ENCODE measurements at regions of chr16 and their contacts with region 1.

Region 1: DNA sequence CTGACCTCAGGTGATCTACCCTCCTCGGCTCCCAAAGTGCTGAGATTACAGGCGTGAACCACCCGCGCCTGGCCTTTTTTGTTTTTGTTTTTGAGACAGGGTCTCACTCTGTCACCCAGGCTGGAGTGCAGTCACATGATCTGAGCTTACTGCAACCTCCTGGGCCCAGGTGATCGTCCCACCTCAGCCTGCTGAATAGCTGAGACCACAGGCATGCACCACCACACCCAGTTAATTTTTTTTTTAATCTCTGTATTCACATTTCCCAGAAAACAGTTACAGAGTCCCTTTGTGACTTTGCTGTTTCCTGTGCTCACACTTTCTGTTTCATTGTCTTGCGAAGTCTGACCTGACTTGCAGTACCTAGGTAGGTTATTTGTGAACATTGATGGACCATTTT is 2.7 kb downstream of the CLUAP1 start:
- DNase-seq: peak; percentile 77
- ATAC-seq: peak; percentile 60
- H3K4me3 Mint-ChIP-seq: peak overlapping the region; percentile 65
- H3K27ac Mint-ChIP-seq: peak overlapping the region; percentile 91
- H3K4me1 Mint-ChIP-seq: peaks cover 62% of the 10 kb centered on the region
- H3K27me3 Mint-ChIP-seq: no peaks in the 10 kb centered on the region

Region 2: DNA sequence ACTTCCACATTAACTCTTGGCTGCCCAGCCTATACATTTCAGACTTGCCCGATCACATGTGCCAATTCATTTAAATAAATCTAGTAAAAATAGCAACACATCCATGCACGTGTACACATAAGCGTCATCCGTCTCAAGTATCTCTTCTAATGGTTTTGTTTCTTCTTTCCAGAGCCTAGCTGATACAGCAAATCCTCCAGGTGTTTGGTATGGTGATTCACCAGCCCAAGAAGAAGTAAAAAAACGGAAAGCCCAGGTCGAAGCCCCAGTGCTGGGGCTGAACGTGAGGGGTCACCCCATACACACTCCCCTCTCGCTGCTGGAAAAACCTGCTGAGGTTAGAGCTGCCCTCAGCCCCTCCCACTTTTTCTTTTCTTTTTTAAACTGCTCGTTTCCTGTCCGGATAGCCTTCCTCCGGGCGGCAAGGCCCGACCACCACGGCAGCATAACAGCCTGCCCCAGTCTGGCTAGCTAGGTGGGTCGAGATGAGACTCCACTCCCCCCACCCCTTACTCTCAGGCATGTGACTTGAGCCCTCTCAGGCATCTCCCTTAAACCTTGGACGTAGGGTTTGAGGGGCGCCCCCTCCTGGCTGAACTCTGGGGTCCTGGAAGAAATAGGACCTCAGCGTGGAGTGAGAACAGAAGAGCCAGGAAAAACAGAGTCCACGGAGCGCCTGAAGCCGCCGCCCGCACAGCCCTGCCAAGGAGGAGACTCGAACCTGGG is 329.5 kb before region 1 on chr16:
- CTCF ChIA-PET with region 1: interaction called, 4 read pairs
- POLR2A ChIA-PET with region 1: no interaction called
- intact Hi-C with region 1: loop called in 1 of 2 experiments (anchors 5 kb)
- DNase-seq: peak; percentile 61
- ATAC-seq: peak; percentile 10
- H3K4me3 Mint-ChIP-seq: peak overlapping the region; percentile 47
- H3K27ac Mint-ChIP-seq: peak overlapping the region; percentile 26
- H3K4me1 Mint-ChIP-seq: peaks cover 37% of the 10 kb centered on the region
- H3K27me3 Mint-ChIP-seq: peaks cover 51% of the 10 kb centered on the region

Region 3: DNA sequence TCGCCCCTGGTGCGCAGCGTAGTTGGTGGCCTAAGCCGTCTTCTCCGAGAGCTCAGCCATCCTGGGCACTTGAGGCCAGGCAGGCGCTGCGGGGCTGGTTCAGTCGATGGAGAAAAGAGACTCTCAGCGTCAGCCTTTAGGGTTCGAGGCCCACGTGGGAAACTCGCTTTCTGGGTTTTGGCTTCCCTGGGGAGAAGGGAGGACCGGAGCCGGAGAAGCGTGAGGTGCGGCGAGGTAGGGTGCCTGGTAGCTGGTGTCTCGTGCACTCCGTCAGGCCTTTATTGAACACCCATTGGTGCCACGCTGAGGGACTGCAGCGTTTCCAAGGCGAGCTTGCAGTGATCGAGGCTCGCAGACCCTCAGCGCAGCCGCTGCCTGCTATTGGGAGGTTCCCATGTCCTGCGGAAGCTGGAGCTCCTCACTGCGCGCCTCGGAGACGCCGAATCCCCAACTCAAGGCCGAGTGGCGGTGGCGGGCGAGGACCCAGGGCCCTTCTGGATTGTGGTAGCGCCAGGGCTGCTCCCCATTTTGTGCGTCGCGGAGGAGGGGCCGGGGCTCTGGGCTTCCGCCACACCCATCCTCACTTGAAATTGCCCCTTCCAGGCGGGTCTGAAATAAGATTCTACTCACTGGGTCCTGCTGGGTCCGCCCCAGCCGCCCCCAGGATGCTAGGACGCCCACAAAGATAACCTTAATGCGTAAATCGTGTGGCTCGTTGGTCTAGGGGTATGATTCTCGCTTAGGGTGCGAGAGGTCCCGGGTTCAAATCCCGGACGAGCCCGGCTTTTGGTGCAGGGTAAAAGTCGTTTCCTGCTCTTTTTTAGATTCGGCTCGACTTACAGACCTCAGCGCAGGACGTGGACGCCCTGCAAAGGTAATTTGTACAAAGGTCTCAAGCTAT is 314.3 kb before region 1 on chr16:
- CTCF ChIA-PET with region 1: no interaction called
- POLR2A ChIA-PET with region 1: no interaction called
- intact Hi-C with region 1: loop called in 1 of 2 experiments (anchors 2 kb)
- DNase-seq: peak; percentile 78
- ATAC-seq: peak; percentile 42
- H3K4me3 Mint-ChIP-seq: peak overlapping the region; percentile 69
- H3K27ac Mint-ChIP-seq: peak overlapping the region; percentile 72
- H3K4me1 Mint-ChIP-seq: peaks cover 46% of the 10 kb centered on the region
- H3K27me3 Mint-ChIP-seq: peaks cover 66% of the 10 kb centered on the region

Region 4: DNA sequence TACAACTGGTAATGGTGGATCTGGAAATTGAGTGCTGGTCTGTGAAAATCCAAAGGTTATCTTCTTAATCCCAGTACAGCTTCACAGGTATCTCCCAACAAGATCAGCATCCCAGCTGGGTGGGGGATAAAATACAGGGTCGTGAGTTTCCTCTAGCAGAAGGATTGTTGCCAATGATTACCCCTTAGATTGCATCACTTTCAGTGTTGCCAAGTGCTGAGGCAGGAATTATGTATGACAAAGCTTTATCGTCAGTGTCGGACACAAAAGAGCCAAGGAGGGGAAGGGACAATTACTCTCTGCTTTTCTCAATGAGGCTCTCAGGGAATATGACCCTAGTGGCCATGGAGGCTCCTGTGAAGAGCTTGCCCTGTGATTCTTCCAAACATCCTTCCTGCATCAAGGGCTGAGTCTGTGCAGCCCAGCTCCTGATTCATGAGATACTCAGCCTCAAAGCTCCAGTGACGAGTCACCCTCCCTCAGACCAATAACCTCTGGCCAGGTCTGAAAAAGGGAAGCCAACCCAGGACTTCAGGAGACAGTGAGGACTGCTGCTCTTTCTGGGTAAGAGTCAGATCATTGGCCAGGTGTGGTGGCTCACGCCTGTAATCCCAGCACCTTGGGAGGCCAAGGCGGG is 300.5 kb before region 1 on chr16:
- CTCF ChIA-PET with region 1: no interaction called
- POLR2A ChIA-PET with region 1: no interaction called
- intact Hi-C with region 1: no loop called
- DNase-seq: no peak
- ATAC-seq: no peak
- H3K4me3 Mint-ChIP-seq: no peak overlapping the region
- H3K27ac Mint-ChIP-seq: no peak overlapping the region
- H3K4me1 Mint-ChIP-seq: no peaks in the 10 kb centered on the region
- H3K27me3 Mint-ChIP-seq: peaks cover 3% of the 10 kb centered on the region

Region 5: DNA sequence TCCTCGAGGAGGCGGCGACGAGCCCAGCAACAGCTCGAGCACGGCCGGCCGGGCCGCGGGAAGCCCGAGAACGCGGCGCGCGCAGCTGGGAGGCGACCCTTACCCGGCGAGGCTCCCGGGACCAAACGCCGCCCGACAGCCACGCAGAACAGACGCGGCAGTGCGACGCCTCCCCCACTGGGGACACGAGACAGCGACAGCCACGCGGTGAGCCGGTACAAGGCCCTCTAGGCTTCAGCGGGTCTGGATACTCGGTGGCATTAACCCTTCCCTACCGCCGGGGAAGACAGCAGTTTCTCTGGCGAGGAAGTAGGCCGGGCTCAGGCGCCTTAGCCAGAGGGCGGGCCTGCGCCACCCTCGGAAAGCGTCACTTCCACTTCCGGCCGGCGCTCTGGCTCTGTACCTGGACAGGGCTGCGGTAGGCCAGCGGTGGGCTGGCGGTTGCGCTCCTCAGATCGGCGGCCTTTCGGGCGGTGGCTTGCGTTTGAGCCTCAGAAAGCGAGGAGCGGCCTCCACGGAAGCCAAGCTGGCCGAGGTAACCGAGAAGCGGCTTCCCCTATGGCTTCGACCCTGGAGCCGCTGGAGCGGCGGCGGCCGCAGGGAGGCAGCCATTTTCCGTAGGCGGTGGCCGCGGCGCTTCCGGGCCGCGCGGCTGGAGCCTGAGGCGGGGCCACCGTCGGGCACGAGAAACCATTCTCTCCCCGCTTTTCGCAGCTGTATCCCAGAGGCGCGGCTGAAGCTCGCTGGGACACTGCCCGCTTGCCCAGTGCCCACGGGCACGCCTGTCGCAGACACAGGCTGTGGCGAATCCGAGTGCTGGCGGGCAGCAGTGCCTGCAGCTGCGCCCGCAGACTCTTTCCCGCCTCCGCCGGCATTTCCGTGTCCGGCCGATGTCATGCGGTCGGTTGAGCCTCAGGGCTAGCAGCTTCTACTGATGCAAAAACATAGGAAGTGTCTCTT is 198.1 kb before region 1 on chr16 and contains the starts of genes TIGD7 and ZNF75A:
- CTCF ChIA-PET with region 1: no interaction called
- POLR2A ChIA-PET with region 1: no interaction called
- intact Hi-C with region 1: loop called in 1 of 2 experiments (anchors 2 kb)
- DNase-seq: peak; percentile 90
- ATAC-seq: peak; percentile 99
- H3K4me3 Mint-ChIP-seq: peak within 1 kb of the TSS; percentile 75
- H3K27ac Mint-ChIP-seq: peak within 1 kb of the TSS; percentile 84
- H3K4me1 Mint-ChIP-seq: peaks cover 15% of the 10 kb centered on the region
- H3K27me3 Mint-ChIP-seq: no peaks in the 10 kb centered on the region
- total RNA-seq, gene TIGD7: 2.9 TPM
- total RNA-seq, gene ZNF75A: 23.2 to 27.4 TPM

Region 6: GRCh38 chr16:3443108-3444031 is 60.2 kb before region 1 on chr16 and contains the starts of genes NAA60 and ZNF597:
- CTCF ChIA-PET with region 1: no interaction called
- POLR2A ChIA-PET with region 1: no interaction called
- intact Hi-C with region 1: loop called in 1 of 2 experiments (anchors 5 kb)
- DNase-seq: peak; percentile 88
- ATAC-seq: peak; percentile 91
- H3K4me3 Mint-ChIP-seq: peak within 1 kb of the TSS; percentile 97
- H3K27ac Mint-ChIP-seq: peak within 1 kb of the TSS; percentile 93
- H3K4me1 Mint-ChIP-seq: peaks cover 13% of the 10 kb centered on the region
- H3K27me3 Mint-ChIP-seq: no peaks in the 10 kb centered on the region
- total RNA-seq, gene NAA60: 25.9 to 38.9 TPM
- total RNA-seq, gene ZNF597: 1.9 to 2.4 TPM

Region 7: DNA sequence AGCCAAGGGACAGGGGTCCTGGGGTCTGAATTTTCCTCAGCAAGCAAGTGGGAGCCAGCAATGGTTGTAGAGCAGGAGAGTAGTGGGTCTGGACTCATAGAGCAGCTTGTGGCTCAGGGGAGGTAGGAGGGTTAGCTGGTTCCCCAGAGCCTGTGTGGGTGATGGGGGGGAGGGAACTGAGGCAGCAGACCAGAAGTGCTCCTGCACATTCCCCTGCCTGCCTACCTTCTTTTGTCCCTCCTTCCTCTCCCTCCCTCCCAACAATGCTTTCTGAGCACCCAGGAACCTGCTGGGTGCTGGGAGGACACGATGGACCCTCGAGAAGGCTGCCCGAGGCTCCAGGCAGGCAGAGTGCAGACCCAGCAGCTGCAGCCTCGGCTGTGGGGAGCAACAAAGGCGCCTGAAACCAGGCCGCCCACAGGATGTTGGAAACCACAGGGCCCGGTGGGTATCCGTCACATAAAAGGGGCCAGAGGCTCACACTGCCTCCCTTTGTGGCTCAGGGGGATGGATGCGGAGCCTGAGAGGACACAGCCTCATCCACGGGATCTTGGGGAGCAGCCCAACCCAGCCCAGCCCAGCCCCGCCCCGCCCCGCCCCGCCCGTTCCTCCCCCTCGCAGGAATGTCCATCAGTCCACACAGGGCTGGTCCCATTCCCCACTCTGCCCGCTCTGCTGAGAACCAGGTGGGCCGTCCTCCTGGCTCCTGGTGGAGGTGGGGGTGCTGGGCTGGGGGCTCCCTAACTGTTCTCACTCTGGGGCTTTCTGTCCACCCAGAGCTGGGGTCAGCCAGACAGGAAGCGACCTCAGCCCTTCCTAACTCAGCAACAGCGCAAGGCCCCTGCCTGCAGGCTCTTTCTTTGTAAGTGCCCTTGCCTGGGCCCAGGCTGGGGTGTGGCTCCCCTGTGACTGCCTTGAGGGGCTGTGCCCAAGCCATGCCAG is 75.4 kb after region 1 on chr16:
- CTCF ChIA-PET with region 1: no interaction called
- POLR2A ChIA-PET with region 1: no interaction called
- intact Hi-C with region 1: loop called (anchors 2 to 5 kb)
- DNase-seq: peak; percentile 82
- ATAC-seq: peak; percentile 68
- H3K4me3 Mint-ChIP-seq: peak overlapping the region; percentile 95
- H3K27ac Mint-ChIP-seq: peak overlapping the region; percentile 97
- H3K4me1 Mint-ChIP-seq: peaks cover 45% of the 10 kb centered on the region
- H3K27me3 Mint-ChIP-seq: no peaks in the 10 kb centered on the region